ENCODE measurements at regions of chr1 and their contacts with region 1.

Region 1: GRCh38 chr1:180571832-180572636 is 13.3 kb downstream of the OVAAL start:
- DNase-seq: peak; percentile 77
- H3K4me3 Mint-ChIP-seq: peak overlapping the region; percentile 17
- H3K27ac Mint-ChIP-seq: peak overlapping the region; percentile 48
- H3K4me1 Mint-ChIP-seq: peaks cover 22% of the 10 kb centered on the region
- H3K27me3 Mint-ChIP-seq: peaks cover 20% of the 10 kb centered on the region

Region 2: DNA sequence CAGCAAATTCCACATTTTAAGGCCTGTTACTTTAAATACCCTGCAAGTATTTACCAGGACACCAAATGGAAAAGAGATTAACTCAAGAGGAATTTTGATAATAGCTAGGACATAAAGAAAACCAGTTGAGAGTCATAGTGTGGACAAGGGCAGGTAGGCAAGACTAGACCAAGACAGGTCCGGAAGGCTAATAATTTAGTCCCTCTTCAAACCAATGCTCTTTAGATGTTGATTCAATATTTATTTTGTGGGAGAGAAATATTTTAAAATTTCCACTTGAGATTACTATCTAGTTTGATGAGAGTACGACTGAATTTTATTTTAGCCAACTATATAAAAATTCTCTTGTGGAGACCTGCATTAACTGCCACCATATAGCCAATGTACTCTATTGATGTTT is 19.4 kb before region 1 on chr1:
- CTCF ChIA-PET with region 1: no interaction called
- POLR2A ChIA-PET with region 1: no interaction called
- intact Hi-C with region 1: no loop called
- DNase-seq: no peak
- H3K4me3 Mint-ChIP-seq: no peak overlapping the region
- H3K27ac Mint-ChIP-seq: no peak overlapping the region
- H3K4me1 Mint-ChIP-seq: no peaks in the 10 kb centered on the region
- H3K27me3 Mint-ChIP-seq: peaks cover 5% of the 10 kb centered on the region

Region 3: GRCh38 chr1:180585994-180586359 is 13.9 kb after region 1 on chr1:
- CTCF ChIA-PET with region 1: no interaction called
- POLR2A ChIA-PET with region 1: interaction called, 5 read pairs
- intact Hi-C with region 1: loop called (anchors 1 kb)
- DNase-seq: no peak
- H3K4me3 Mint-ChIP-seq: no peak overlapping the region
- H3K27ac Mint-ChIP-seq: peak overlapping the region; percentile 78
- H3K4me1 Mint-ChIP-seq: peaks cover 19% of the 10 kb centered on the region
- H3K27me3 Mint-ChIP-seq: peaks cover 2% of the 10 kb centered on the region